B cell (primary cell): ENCODE measurements at regions of chr17 and their contacts with region 1.

Region 1: DNA sequence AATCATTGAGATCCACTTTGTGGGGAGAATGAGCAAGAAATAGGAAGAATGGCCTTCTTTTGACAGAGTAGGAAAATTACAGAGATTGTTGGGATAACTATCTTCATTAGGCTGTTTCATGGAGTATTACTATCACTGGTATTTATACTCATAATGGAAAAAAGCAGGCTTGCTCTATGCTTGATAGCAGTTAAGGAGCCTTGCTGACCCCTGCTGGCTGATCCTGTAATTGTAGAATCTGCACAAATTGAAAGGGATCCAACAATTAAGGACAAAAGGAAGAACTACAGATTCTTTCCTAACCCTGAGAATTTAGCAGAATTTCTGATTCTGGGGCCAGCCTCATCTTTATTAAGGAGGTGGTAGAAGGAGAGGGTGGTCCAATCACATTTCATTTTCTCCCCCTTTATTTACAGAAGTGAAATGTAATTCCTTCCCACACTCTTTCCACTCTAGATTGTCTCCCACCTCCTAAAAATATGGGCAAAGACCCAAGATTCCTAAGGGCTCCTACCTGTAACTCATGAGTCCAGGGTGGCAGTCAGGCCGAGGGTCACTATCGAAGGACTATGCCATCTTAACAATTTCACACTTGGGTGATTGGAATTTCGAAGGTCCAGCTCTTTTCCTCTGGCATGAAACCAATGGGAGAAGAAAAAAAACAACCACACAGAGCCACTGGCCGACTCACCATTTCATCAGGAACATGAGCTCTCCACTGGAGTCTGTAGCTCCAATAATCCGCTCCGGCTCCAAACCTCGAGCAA is 26.3 kb downstream of the NFE2L1 start:
- DNase-seq: peak; percentile 81
- ATAC-seq: peak; percentile 77
- H3K4me3 ChIP-seq: no peak overlapping the region
- H3K4me3 Mint-ChIP-seq: no peak overlapping the region
- H3K27ac ChIP-seq: no peak overlapping the region
- H3K27ac Mint-ChIP-seq: no peak overlapping the region
- H3K4me1 ChIP-seq: no peaks in the 10 kb centered on the region
- H3K4me1 Mint-ChIP-seq: no peaks in the 10 kb centered on the region
- H3K27me3 ChIP-seq: no peaks in the 10 kb centered on the region
- H3K27me3 Mint-ChIP-seq: no peaks in the 10 kb centered on the region
- CTCF ChIP-seq: peak; percentile 90

Region 2: DNA sequence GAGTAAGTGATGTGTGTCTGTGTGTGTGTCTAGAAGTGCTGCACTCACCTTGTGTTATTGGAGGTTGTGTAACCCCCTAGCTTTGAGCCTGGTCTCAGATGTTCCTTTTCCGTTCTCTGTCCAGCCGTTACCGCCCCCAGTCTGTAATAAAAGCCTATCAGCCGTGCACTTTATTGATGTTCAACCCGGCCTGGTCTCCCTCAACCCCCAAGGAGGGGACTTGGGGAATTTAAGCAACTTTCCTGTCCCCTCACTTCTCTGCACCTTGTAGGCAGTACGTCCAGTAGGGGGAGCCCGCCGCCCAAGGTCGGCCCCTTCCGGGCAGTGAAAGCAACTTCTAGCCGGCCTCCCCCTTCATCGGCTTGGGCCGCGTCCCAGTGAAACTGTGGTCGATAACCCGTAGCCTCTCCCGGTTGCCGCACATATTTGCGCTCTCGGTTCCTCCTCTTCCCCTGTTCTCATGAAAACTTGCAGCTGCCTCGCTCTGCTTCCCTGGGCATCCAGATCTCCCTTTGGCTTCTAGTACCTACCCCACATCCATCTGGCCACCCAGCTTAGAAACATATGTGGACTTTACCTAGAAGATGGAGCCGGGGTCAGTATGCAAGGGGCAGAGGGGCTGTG is 125.2 kb before region 1 on chr17:
- CTCF ChIA-PET with region 1: interaction called, 9 read pairs
- POLR2A ChIA-PET with region 1: no interaction called
- intact Hi-C with region 1: loop called (anchors 1 kb)
- DNase-seq: peak; percentile 80
- ATAC-seq: peak; percentile 81
- H3K4me3 ChIP-seq: peak overlapping the region in 3 of 5 experiments; percentile 31 to 46 (median 38)
- H3K4me3 Mint-ChIP-seq: peak overlapping the region; percentile 78
- H3K27ac ChIP-seq: peak overlapping the region in 1 of 2 donors; percentile 63
- H3K27ac Mint-ChIP-seq: peak overlapping the region; percentile 66
- H3K4me1 ChIP-seq: peaks cover 13 to 23% of the 10 kb centered on the region in 2 donors
- H3K4me1 Mint-ChIP-seq: peaks cover 23% of the 10 kb centered on the region
- H3K27me3 ChIP-seq: no peaks in the 10 kb centered on the region
- H3K27me3 Mint-ChIP-seq: no peaks in the 10 kb centered on the region
- CTCF ChIP-seq: peak; percentile 89

Region 3: GRCh38 chr17:48011405-48012150 is 62.9 kb before region 1 on chr17:
- CTCF ChIA-PET with region 1: interaction called, 10 read pairs
- POLR2A ChIA-PET with region 1: no interaction called
- intact Hi-C with region 1: no loop called
- DNase-seq: peak; percentile 61
- ATAC-seq: peak; percentile 67
- H3K4me3 ChIP-seq: peak overlapping the region; percentile 15 to 72 (median 38)
- H3K4me3 Mint-ChIP-seq: peak overlapping the region; percentile 83
- H3K27ac ChIP-seq: no peak overlapping the region
- H3K27ac Mint-ChIP-seq: peak overlapping the region; percentile 32
- H3K4me1 ChIP-seq: peaks cover 14% of the 10 kb centered on the region in 2 donors
- H3K4me1 Mint-ChIP-seq: peaks cover 17% of the 10 kb centered on the region
- H3K27me3 ChIP-seq: peaks cover 0 to 40% (median 19%) of the 10 kb centered on the region in 4 experiments
- H3K27me3 Mint-ChIP-seq: peaks cover 34% of the 10 kb centered on the region
- CTCF ChIP-seq: peak; percentile 52

Region 4: GRCh38 chr17:48037036-48037837 is 37.3 kb before region 1 on chr17 and contains the start of gene COPZ2:
- CTCF ChIA-PET with region 1: interaction called, 44 read pairs
- POLR2A ChIA-PET with region 1: no interaction called
- intact Hi-C with region 1: loop called (anchors 1 kb)
- DNase-seq: peak; percentile 79
- ATAC-seq: peak; percentile 96
- H3K4me3 ChIP-seq: peak within 1 kb of the TSS; percentile 12 to 76 (median 70)
- H3K4me3 Mint-ChIP-seq: peak within 1 kb of the TSS; percentile 90
- H3K27ac ChIP-seq: no peak within 1 kb of the TSS
- H3K27ac Mint-ChIP-seq: peak within 1 kb of the TSS; percentile 60
- H3K4me1 ChIP-seq: peaks cover 15% of the 10 kb centered on the region in 2 donors
- H3K4me1 Mint-ChIP-seq: peaks cover 15% of the 10 kb centered on the region
- H3K27me3 ChIP-seq: peaks cover 0 to 38% (median 9%) of the 10 kb centered on the region in 4 experiments
- H3K27me3 Mint-ChIP-seq: peaks cover 24% of the 10 kb centered on the region
- CTCF ChIP-seq: peak; percentile 94
- total RNA-seq, gene COPZ2: 1.2 and 2.3 TPM in 2 replicates

Region 5: GRCh38 chr17:48054238-48055185 is 20.0 kb before region 1 on chr17:
- CTCF ChIA-PET with region 1: interaction called, 28 read pairs
- POLR2A ChIA-PET with region 1: interaction called, 6 read pairs
- intact Hi-C with region 1: no loop called
- DNase-seq: no peak
- ATAC-seq: no peak
- H3K4me3 ChIP-seq: no peak overlapping the region
- H3K4me3 Mint-ChIP-seq: peak overlapping the region; percentile 77
- H3K27ac ChIP-seq: peak overlapping the region in 1 of 2 donors; percentile 76
- H3K27ac Mint-ChIP-seq: peak overlapping the region; percentile 91
- H3K4me1 ChIP-seq: peaks cover 31 to 41% of the 10 kb centered on the region in 2 donors
- H3K4me1 Mint-ChIP-seq: peaks cover 62% of the 10 kb centered on the region
- H3K27me3 ChIP-seq: no peaks in the 10 kb centered on the region
- H3K27me3 Mint-ChIP-seq: no peaks in the 10 kb centered on the region
- CTCF ChIP-seq: no peak

Region 6: GRCh38 chr17:48101012-48101720 is 26.7 kb after region 1 on chr17 and contains the start of gene CBX1:
- CTCF ChIA-PET with region 1: interaction called, 29 read pairs
- POLR2A ChIA-PET with region 1: no interaction called
- intact Hi-C with region 1: no loop called
- DNase-seq: peak; percentile 94
- ATAC-seq: peak; percentile 94
- H3K4me3 ChIP-seq: peak within 1 kb of the TSS; percentile 68 to 85 (median 77)
- H3K4me3 Mint-ChIP-seq: peak within 1 kb of the TSS; percentile 91
- H3K27ac ChIP-seq: peak within 1 kb of the TSS; percentile 72 to 76
- H3K27ac Mint-ChIP-seq: peak within 1 kb of the TSS; percentile 93
- H3K4me1 ChIP-seq: peaks cover 18 to 28% of the 10 kb centered on the region in 2 donors
- H3K4me1 Mint-ChIP-seq: peaks cover 41% of the 10 kb centered on the region
- H3K27me3 ChIP-seq: no peaks in the 10 kb centered on the region
- H3K27me3 Mint-ChIP-seq: no peaks in the 10 kb centered on the region
- CTCF ChIP-seq: no peak
- total RNA-seq, gene CBX1: 29.7 and 33.1 TPM in 2 replicates

Region 7: DNA sequence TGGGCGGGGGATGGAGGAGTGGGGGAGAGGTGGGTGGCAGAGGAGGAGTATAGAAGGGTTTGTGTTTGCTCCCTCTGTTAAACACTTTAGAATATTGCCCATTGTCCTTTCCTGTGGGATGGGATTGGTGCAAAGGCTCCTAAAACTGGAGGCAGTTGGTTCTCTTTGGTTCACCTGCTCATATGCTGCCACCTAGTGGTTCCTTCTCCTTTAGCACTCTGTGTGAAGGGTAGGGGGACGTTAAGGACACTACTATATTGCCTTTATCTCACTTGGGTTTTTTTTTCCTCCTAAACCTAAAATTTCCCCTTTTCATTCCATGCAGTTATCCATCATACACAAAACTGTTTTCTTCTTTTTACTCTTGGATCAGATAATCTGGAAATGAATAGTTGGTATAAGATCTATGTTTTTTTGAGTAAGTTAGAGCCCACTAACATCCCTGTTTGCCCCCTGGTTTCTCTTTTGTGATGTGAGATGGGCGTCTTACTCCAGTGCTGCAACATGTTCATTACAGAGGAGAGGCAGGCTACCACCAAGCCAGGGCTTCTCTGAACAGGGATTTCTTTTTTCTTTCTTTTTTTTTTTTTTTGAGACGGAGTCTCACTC is 56.8 kb after region 1 on chr17:
- CTCF ChIA-PET with region 1: interaction called, 237 read pairs
- POLR2A ChIA-PET with region 1: interaction called, 5 read pairs
- intact Hi-C with region 1: no loop called
- DNase-seq: peak; percentile 79
- ATAC-seq: peak; percentile 87
- H3K4me3 ChIP-seq: no peak overlapping the region
- H3K4me3 Mint-ChIP-seq: no peak overlapping the region
- H3K27ac ChIP-seq: no peak overlapping the region
- H3K27ac Mint-ChIP-seq: peak overlapping the region; percentile 7
- H3K4me1 ChIP-seq: no peaks in the 10 kb centered on the region
- H3K4me1 Mint-ChIP-seq: peaks cover 3% of the 10 kb centered on the region
- H3K27me3 ChIP-seq: no peaks in the 10 kb centered on the region
- H3K27me3 Mint-ChIP-seq: no peaks in the 10 kb centered on the region
- CTCF ChIP-seq: peak; percentile 90